Caco-2 (cell line): ENCODE measurements at regions of chr7 and their contacts with region 1.

Region 1: DNA sequence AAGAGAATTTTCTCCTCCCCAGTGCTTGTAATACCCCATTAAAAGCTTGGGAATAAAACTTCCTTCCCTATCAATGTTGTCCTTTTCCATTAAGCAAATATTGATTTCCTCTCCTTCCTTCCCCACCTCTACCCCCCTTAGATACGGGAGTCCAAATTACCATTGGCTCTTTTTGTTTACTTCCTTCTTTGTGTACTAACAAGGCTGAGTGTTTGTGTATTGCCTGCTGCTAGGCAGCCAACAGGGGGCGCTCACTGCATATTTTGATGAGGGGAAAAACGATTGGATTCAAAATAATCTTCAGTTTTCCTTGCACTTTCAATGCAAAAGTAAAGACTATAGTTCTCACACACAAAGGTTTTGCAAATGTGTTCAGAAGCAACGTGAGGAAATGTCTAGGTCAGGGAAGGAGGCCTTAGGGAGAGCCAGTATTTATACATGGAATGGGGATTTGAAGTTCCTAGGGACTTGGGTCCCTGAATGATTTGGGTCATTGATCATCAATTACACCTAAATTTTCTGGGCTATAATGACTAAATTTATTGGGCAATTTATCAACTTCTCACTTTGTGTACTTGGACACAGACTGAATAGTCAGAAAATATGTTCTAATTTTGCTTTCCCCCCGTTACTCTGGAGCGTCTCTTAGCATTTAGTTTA is 23.6 kb upstream of the VPS41 start:
- DNase-seq: peak; percentile 46 to 73
- H3K4me3 ChIP-seq: no peak overlapping the region
- H3K4me3 Mint-ChIP-seq: no peak overlapping the region
- H3K27ac Mint-ChIP-seq: no peak overlapping the region
- H3K4me1 ChIP-seq: peaks cover 19% of the 10 kb centered on the region
- H3K4me1 Mint-ChIP-seq: peaks cover 7% of the 10 kb centered on the region
- H3K27me3 ChIP-seq: no peaks in the 10 kb centered on the region
- H3K27me3 Mint-ChIP-seq: no peaks in the 10 kb centered on the region
- CTCF ChIP-seq: peak; percentile 87 to 93

Region 2: GRCh38 chr7:38796626-38797501 is 135.8 kb before region 1 on chr7:
- CTCF ChIA-PET with region 1: no interaction called
- POLR2A ChIA-PET with region 1: no interaction called
- intact Hi-C with region 1: loop called (anchors 5 kb)
- DNase-seq: peak in 1 of 2 experiments; percentile 68
- H3K4me3 ChIP-seq: no peak overlapping the region
- H3K4me3 Mint-ChIP-seq: no peak overlapping the region
- H3K27ac Mint-ChIP-seq: no peak overlapping the region
- H3K4me1 ChIP-seq: no peaks in the 10 kb centered on the region
- H3K4me1 Mint-ChIP-seq: no peaks in the 10 kb centered on the region
- H3K27me3 ChIP-seq: no peaks in the 10 kb centered on the region
- H3K27me3 Mint-ChIP-seq: no peaks in the 10 kb centered on the region
- CTCF ChIP-seq: peak; percentile 69 to 84

Region 3: DNA sequence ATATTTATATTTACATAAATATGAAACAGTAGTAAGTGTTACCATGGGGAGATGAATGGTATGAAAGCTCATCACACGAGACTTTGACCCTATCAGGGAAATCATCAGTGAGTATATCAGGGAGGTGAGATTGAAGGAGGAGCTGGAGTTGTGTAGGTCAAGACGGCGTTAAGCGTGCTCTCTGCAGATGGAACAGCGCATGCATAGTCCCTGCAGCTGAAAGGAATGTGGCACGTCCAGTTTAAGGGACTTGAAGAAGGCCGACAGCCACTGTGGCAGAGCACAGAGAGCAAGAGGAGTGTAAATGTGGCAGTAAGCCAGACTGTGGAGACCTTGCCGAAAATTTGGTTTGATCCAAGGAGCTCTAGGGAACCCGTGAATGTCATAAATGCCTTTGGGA is 84.0 kb after region 1 on chr7:
- CTCF ChIA-PET with region 1: no interaction called
- POLR2A ChIA-PET with region 1: no interaction called
- intact Hi-C with region 1: loop called (anchors 1 kb)
- DNase-seq: peak; percentile 87 to 94
- H3K4me3 ChIP-seq: no peak overlapping the region
- H3K4me3 Mint-ChIP-seq: peak overlapping the region; percentile 64
- H3K27ac Mint-ChIP-seq: peak overlapping the region; percentile 89
- H3K4me1 ChIP-seq: peaks cover 18% of the 10 kb centered on the region
- H3K4me1 Mint-ChIP-seq: peaks cover 28% of the 10 kb centered on the region
- H3K27me3 ChIP-seq: no peaks in the 10 kb centered on the region
- H3K27me3 Mint-ChIP-seq: no peaks in the 10 kb centered on the region
- CTCF ChIP-seq: no peak

Region 4: GRCh38 chr7:39197831-39198230 is 265.2 kb after region 1 on chr7:
- CTCF ChIA-PET with region 1: no interaction called
- POLR2A ChIA-PET with region 1: no interaction called
- intact Hi-C with region 1: loop called (anchors 10 kb)
- DNase-seq: no peak
- H3K4me3 ChIP-seq: no peak overlapping the region
- H3K4me3 Mint-ChIP-seq: no peak overlapping the region
- H3K27ac Mint-ChIP-seq: no peak overlapping the region
- H3K4me1 ChIP-seq: no peaks in the 10 kb centered on the region
- H3K4me1 Mint-ChIP-seq: no peaks in the 10 kb centered on the region
- H3K27me3 ChIP-seq: no peaks in the 10 kb centered on the region
- H3K27me3 Mint-ChIP-seq: peaks cover 6% of the 10 kb centered on the region
- CTCF ChIP-seq: no peak

Region 5: DNA sequence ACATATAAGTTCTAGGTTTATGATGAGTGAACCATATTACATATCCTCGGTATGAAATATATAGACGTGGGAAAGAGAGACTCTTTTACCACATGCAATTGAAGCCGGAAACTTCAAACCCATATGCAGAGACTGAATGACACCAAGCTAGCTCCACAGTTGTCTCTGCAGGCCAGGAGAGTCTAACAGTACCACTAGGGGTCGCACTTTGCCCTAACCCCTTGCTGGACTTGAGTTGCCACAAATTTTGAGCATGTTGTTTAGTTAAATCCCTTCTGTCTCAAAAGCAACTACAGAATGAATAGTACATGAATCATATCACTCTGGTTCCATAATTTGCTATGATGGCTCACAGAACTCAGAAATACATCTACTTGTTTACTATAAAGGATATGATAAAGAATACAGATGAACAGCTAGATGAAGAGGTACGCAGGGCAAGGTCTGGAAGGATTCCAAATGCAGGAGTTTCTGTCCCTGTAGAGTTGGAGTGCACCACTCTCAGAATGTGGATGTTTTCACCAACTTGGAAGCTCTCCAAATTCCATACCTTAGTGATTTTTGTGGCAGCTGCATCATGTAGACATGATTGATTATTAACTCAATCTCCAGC is 521.2 kb after region 1 on chr7:
- CTCF ChIA-PET with region 1: no interaction called
- POLR2A ChIA-PET with region 1: no interaction called
- intact Hi-C with region 1: loop called (anchors 5 kb)
- DNase-seq: peak; percentile 53 to 62
- H3K4me3 ChIP-seq: no peak overlapping the region
- H3K4me3 Mint-ChIP-seq: no peak overlapping the region
- H3K27ac Mint-ChIP-seq: no peak overlapping the region
- H3K4me1 ChIP-seq: no peaks in the 10 kb centered on the region
- H3K4me1 Mint-ChIP-seq: no peaks in the 10 kb centered on the region
- H3K27me3 ChIP-seq: no peaks in the 10 kb centered on the region
- H3K27me3 Mint-ChIP-seq: peaks cover 5% of the 10 kb centered on the region
- CTCF ChIP-seq: peak; percentile 69 to 80

Region 6: GRCh38 chr7:39517240-39517639 is 584.6 kb after region 1 on chr7:
- CTCF ChIA-PET with region 1: no interaction called
- POLR2A ChIA-PET with region 1: no interaction called
- intact Hi-C with region 1: loop called (anchors 1 kb)
- DNase-seq: no peak
- H3K4me3 ChIP-seq: no peak overlapping the region
- H3K4me3 Mint-ChIP-seq: no peak overlapping the region
- H3K27ac Mint-ChIP-seq: no peak overlapping the region
- H3K4me1 ChIP-seq: no peaks in the 10 kb centered on the region
- H3K4me1 Mint-ChIP-seq: no peaks in the 10 kb centered on the region
- H3K27me3 ChIP-seq: no peaks in the 10 kb centered on the region
- H3K27me3 Mint-ChIP-seq: peaks cover 8% of the 10 kb centered on the region
- CTCF ChIP-seq: no peak